A549 (cell line): ENCODE measurements at regions of chr5 and their contacts with region 1.

Region 1: DNA sequence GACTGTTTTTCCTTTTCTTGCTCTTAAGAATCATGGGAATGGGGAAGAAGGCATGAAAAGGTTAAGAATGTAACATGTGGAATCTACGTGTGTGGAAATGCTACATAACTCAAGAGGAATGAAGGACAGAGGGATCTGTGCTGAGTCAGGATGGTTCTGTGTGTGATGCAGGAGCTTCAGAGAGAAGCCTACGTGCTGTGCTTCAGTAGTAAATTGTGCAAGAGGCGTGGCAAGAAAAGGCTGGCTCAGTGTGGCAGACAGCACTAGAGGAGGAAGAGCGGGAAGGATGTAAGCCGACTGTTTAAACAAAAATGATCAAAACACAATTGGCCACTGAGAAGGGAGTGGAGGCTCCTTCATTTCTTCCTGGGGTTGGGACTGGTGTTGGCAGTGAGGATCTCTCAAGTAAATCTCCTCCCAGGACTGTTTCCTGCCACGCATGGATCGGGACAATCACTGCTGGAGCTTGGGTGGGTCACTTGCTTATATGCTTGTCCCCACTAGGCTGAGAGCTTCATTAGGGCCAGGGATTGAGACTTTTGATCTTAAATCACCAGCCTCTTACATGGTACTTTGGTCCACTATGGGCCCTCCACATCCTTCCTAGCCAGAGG is 59.4 kb upstream of the BASP1 start:
- DNase-seq: peak in 1 of 2 experiments; percentile 79
- ATAC-seq: peak; percentile 85 to 89
- H3K4me3 ChIP-seq: no peak overlapping the region
- H3K27ac ChIP-seq: peak overlapping the region; percentile 62 to 74
- H3K4me1 ChIP-seq: peaks cover 22% of the 10 kb centered on the region
- CTCF ChIP-seq: no peak
- EP300 ChIP-seq: no peak
- POLR2A ChIP-seq: no peak
- RAD21 ChIP-seq: no peak

Region 2: GRCh38 chr5:17180957-17181723 is 23.1 kb after region 1 on chr5:
- CTCF ChIA-PET with region 1: interaction called, 10 read pairs
- POLR2A ChIA-PET with region 1: interaction called, 7 read pairs
- DNase-seq: peak; percentile 72 to 95
- ATAC-seq: peak; percentile 96 to 99
- H3K4me3 ChIP-seq: no peak overlapping the region
- H3K27ac ChIP-seq: peak overlapping the region; percentile 69 to 87
- H3K4me1 ChIP-seq: peaks cover 44% of the 10 kb centered on the region
- CTCF ChIP-seq: no peak
- EP300 ChIP-seq: peak; percentile 83 to 93; a peak in 4 of 5 replicates
- POLR2A ChIP-seq: no peak
- RAD21 ChIP-seq: peak; percentile 29 to 30; a peak in 1 of 5 replicates